AG04450 (cell line): ENCODE measurements at regions of chr10 and their contacts with region 1.

Region 1: DNA sequence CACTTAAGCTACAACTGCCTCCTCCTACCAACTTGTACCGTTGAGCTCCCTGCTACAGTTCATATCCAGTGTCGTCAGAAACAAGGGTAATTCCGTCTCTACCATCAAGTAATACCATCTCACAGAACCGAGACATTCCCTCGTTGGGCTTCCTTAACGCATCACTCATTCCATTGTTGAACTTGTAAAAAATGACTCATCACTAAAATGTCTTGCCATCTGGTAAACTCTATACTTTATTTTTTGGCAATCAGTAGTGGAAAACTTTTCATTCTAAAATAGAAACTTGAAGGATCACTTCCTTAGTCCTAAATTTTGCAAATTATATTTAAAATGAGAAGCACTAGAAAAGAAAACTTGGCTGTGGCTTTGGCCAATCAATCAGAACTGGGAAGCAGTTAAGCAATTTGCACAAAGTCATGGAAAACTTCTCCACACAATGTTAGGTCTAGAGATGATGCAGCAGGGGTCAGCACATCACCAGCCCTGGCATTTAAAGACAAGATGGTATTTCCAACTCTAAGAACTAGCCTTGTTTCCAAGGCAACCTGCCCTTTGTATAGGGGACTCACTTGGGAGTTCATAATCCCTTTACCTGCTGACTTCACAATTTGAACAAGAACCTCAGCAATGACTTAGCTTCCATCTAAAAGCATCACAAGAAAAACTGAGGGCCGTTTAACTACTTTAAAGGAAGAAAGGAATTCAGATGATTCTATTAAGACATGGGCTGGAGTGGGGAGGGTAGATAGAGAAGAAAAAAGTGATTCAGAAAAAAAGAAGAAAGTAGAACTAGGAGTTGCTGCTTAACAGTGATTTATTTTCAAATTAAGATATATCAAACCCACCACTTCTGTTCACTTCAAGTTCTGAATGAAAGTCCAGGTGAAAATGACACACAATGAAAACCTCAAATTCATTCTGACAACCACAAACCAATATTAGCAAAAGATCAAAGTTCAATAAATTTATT is 288.1 kb downstream of the PARD3 start:
- DNase-seq: peak; percentile 89
- H3K4me3 ChIP-seq: peak overlapping the region; percentile 5; the same call in 1 of the 2 replicates
- H3K27ac ChIP-seq: peak overlapping the region; percentile 98
- H3K27me3 ChIP-seq: no peaks in the 10 kb centered on the region
- CTCF ChIP-seq: peak; percentile 43

Region 2: GRCh38 chr10:34407324-34407805 is 119.7 kb before region 1 on chr10:
- CTCF ChIA-PET with region 1: no interaction called
- POLR2A ChIA-PET with region 1: interaction called, 13 read pairs
- DNase-seq: no peak
- H3K4me3 ChIP-seq: no peak overlapping the region
- H3K27ac ChIP-seq: no peak overlapping the region
- H3K27me3 ChIP-seq: no peaks in the 10 kb centered on the region
- CTCF ChIP-seq: no peak

Region 3: GRCh38 chr10:34637418-34637911 is 110.4 kb after region 1 on chr10:
- CTCF ChIA-PET with region 1: interaction called, 14 read pairs
- POLR2A ChIA-PET with region 1: interaction called, 3 read pairs
- DNase-seq: no peak
- H3K4me3 ChIP-seq: no peak overlapping the region
- H3K27ac ChIP-seq: no peak overlapping the region
- H3K27me3 ChIP-seq: no peaks in the 10 kb centered on the region
- CTCF ChIP-seq: peak; percentile 99